ENCODE measurements at regions of chr15 and their contacts with region 1.

Region 1: GRCh38 chr15:43440721-43441281 is 52.2 kb downstream of the TP53BP1 start:
- DNase-seq: peak; percentile 95
- H3K4me3 ChIP-seq: no peak overlapping the region
- H3K27ac ChIP-seq: peak overlapping the region; percentile 61
- H3K4me1 ChIP-seq: peaks cover 7% of the 10 kb centered on the region
- H3K27me3 ChIP-seq: no peaks in the 10 kb centered on the region
- CTCF ChIP-seq: peak; percentile 62 to 75

Region 2: DNA sequence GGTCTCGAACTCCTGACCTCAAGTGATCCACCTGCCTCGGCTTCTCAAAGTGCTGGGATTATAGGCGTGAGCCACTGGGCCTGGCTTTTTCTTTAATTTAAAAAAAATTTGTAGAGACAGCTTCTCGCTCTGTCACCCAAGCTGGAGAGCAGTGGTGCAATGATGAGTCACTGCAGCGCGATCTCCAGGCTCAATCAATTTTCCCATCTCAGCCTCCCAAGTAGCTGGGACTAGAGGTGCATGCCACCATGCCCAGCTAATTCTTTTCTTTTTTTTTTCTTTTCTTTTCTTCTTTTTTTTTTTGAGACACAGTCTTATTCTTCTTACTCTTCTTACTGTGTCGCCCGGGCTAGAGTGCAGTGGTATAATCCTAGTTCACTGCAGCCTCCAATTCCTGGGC is 50.1 kb before region 1 on chr15:
- CTCF ChIA-PET with region 1: no interaction called
- dilution Hi-C with region 1: no loop called
- in situ Hi-C with region 1: no loop called
- intact Hi-C with region 1: no loop called
- DNase-seq: no peak
- H3K4me3 ChIP-seq: no peak overlapping the region
- H3K27ac ChIP-seq: no peak overlapping the region
- H3K4me1 ChIP-seq: no peaks in the 10 kb centered on the region
- H3K27me3 ChIP-seq: no peaks in the 10 kb centered on the region
- CTCF ChIP-seq: no peak

Region 3: DNA sequence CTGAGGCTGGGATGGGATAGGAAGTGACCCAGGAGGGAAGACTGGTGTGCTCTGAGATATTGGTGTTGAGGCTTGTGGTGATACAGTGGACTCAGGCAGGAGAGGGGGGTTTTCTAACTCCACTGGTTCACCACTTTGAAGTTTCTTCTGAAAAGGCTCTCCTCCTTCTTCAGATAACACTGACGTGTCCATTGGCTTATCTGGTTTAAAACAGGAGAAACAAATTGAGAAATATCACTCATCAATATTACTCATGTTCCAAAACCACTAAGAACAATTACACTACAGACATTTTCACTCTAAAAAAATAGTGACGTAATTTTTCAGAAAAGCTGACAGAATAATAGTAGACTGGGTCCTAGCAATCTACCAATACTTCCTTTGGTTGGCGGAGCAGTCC is 29.1 kb after region 1 on chr15:
- CTCF ChIA-PET with region 1: no interaction called
- dilution Hi-C with region 1: no loop called
- in situ Hi-C with region 1: no loop called
- intact Hi-C with region 1: loop called (anchors 2 kb)
- DNase-seq: peak; percentile 81
- H3K4me3 ChIP-seq: no peak overlapping the region
- H3K27ac ChIP-seq: peak overlapping the region; percentile 18
- H3K4me1 ChIP-seq: peaks cover 25% of the 10 kb centered on the region
- H3K27me3 ChIP-seq: no peaks in the 10 kb centered on the region
- CTCF ChIP-seq: no peak

Region 4: DNA sequence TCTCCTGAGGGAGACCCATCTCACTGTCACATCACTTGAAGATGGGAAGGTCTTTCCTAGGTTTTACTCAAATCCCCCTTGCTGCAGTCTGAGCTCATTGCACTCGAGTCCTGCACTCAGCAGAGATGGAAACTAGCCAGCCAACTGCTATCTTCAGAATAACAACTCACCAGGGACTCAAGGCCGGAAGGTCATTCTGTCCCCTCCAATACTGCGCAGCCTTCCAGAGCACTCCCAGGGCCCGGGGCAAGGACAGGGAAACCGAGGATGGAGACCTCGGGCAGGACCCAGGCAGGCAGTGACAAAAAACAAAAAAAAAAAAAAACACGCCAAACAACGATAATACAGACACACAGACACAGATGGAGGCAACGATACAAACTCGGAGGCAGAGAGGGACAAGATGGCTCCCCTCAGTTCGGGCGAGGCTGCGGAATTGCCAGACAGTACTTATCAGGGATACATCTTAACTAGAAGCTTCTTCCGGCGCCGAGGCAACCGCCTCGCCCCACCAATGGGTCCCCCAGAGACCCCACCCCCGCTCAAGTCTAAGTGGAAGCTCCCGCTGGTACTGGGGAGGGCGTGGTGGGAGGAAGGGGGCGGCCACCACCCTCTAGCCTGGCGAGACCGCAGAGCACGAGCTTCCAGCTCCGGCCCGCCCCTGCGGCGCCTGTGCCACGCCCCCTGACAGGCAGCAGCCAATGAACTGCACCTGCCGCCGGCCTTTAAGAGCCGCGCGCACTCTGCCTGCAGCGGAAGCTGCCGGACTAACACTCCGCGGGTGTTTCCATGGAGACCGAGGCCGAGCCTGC is 69.6 kb after region 1 on chr15:
- CTCF ChIA-PET with region 1: interaction called, 17 read pairs
- dilution Hi-C with region 1: no loop called
- in situ Hi-C with region 1: no loop called
- intact Hi-C with region 1: loop called (anchors 1 kb)
- DNase-seq: peak; percentile 96
- H3K4me3 ChIP-seq: peak overlapping the region; percentile 59 to 83 (median 72)
- H3K27ac ChIP-seq: peak overlapping the region; percentile 69
- H3K4me1 ChIP-seq: peaks cover 10% of the 10 kb centered on the region
- H3K27me3 ChIP-seq: no peaks in the 10 kb centered on the region
- CTCF ChIP-seq: peak in 1 of 2 donors; percentile 13